Left ventricle myocardium inferior (tissue), 1 donor: ENCODE measurements at regions of chr12 and their contacts with region 1.

Region 1: GRCh38 chr12:107884769-107885694 is 110.5 kb downstream of the ASCL4 start:
- DNase-seq: no peak
- H3K4me3 ChIP-seq: no peak overlapping the region
- H3K27ac ChIP-seq: no peak overlapping the region
- H3K4me1 ChIP-seq: no peaks in the 10 kb centered on the region
- H3K27me3 ChIP-seq: peaks cover 89% of the 10 kb centered on the region
- CTCF ChIP-seq: peak; percentile 71

Region 2: DNA sequence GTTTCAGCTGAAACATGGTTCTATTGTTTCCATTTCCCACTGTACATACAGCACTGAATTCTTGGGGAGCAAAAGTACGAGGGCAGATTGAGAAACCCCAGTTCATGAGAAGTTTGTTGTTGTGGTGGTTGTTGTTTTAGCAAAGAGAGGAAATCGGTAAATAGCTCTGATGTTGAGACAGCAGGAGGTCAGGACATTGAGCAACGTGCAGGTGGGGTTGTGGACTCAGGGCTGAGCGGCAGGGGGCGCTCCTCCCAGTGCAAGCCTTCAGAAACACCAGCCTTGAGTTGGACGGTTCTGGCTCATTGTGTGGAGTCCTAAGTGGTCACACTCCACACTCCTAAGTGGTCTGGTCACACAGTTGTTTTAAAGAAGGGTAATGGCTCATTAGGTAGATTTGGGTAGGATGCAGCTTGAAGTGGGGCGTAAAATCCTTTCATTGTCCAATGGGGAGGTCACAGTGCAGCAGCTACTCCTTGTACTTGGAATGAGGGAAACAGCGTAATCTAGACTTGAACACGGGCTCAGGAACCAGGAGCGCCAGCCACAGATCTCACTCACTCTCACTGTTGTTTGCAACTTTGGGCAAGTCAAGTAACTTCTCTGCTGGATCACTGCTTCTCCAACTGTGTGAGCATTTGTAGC is 213.9 kb before region 1 on chr12:
- intact Hi-C with region 1: loop called (anchors 10 kb)
- DNase-seq: no peak
- H3K4me3 ChIP-seq: no peak overlapping the region
- H3K27ac ChIP-seq: no peak overlapping the region
- H3K4me1 ChIP-seq: no peaks in the 10 kb centered on the region
- H3K27me3 ChIP-seq: peaks cover 69% of the 10 kb centered on the region
- CTCF ChIP-seq: peak; percentile 64

Region 3: DNA sequence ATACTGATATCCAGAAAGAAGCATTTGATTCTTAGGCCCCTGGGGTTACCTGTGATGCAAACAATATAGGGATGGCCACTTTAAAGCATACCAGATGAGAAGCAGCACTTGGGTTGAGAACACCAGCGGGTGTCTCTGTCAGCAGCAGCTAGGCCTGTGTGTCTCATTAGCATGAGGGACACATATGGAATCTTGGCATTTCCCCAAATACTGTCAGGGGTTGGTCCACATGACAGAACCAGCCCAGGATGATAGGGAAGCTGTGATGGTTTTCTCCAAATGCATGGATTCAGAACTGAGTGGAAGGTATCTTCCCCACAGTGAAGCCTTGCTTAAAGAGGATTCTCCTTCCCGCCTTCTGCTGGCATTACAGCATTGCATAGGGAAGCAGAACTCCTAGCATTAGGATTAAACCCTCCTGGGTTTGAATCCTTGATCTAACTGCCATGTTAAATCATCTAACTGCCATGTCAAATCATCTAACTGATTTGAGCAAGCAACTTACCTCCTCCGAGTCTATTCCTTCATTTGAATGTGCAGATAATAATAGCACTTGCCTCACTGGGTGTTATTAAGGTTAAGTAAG is 132.5 kb after region 1 on chr12:
- intact Hi-C with region 1: no loop called
- DNase-seq: no peak
- H3K4me3 ChIP-seq: no peak overlapping the region
- H3K27ac ChIP-seq: no peak overlapping the region
- H3K4me1 ChIP-seq: no peaks in the 10 kb centered on the region
- H3K27me3 ChIP-seq: peaks cover 92% of the 10 kb centered on the region
- CTCF ChIP-seq: no peak